ENCODE measurements at regions of chr15 and their contacts with region 1.

Region 1: DNA sequence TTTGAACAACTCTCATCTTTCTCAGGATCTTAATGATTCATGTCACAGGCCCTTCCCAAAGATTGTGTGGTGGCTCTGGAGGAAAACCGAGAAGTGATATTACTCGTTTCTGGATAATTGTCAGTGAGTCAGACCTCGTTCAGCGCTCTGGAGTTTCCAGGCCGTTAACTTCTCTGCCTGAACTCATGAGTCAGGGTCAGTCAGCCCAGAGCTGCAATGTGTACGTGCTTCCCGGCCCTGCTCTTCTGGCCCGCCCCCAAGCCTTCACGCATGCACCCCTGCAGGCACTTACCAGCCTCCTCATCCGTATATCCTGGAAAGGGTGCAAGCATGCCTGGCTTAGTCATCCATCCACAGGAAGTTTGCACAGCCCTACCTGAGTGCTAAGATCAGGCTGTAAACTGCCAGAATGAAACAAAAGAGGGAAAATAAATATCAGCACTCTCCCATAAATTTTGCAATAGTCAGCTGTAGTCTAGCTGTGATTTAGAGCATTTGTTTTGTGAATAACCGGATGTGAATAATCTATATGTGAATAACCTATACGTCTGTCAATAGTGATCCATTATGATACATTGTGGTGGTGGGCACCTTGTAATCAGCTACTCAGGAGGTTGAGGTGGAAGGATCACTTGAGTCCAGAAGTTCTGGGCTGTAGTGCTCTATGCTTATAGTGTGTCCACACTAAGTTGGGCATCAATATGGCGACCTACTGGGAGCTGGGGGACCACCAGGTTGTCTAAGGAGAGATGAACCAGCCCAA is 35.3 kb upstream of the SEMA4B start:
- DNase-seq: peak; percentile 99
- ATAC-seq: peak; percentile 97
- H3K4me3 ChIP-seq: no peak overlapping the region
- H3K27ac ChIP-seq: peak overlapping the region; percentile 100
- H3K4me1 ChIP-seq: peaks cover 61% of the 10 kb centered on the region
- H3K27me3 ChIP-seq: no peaks in the 10 kb centered on the region
- CTCF ChIP-seq: no peak

Region 2: DNA sequence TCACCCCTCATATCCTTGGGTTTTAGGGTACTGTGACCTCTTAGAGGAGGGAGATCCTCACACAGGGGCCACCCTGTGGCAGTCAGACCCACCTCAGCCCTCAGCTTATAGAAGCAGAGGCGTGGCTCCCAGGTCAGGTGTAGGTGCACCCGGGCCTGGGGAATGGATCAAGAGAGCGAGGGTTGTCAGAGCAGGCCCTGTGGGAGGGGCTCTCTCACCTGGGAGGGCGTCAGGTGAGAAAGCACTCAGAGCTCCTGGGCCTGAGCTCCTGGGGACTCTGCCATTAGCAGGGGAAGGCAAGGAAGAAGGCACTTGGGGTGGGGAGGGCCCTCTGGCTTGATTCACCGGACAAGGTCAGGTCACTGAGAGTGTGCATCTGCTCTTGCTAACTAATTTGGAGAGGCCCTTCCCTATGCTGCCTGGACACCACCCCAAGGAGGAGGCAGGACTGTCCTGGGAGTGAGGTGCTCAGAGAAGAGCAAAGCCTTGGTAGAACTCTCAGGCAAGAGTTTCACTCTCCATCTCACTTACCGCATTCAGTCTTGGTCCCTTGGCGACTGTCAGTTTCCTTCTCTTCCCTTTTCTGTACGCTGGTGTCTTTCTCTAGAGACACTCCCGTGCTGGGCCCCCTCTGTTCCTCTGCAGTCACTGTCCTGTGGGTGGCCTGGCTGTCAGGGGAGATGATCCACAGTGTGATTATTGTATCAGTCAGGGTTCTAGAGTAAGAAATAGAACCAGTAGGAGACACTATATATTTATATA is 107.7 kb before region 1 on chr15:
- CTCF ChIA-PET with region 1: no interaction called
- POLR2A ChIA-PET with region 1: no interaction called
- in situ Hi-C with region 1: no loop called
- intact Hi-C with region 1: no loop called
- DNase-seq: no peak
- ATAC-seq: no peak
- H3K4me3 ChIP-seq: no peak overlapping the region
- H3K27ac ChIP-seq: no peak overlapping the region
- H3K4me1 ChIP-seq: peaks cover 24% of the 10 kb centered on the region
- H3K27me3 ChIP-seq: no peaks in the 10 kb centered on the region
- CTCF ChIP-seq: no peak

Region 3: DNA sequence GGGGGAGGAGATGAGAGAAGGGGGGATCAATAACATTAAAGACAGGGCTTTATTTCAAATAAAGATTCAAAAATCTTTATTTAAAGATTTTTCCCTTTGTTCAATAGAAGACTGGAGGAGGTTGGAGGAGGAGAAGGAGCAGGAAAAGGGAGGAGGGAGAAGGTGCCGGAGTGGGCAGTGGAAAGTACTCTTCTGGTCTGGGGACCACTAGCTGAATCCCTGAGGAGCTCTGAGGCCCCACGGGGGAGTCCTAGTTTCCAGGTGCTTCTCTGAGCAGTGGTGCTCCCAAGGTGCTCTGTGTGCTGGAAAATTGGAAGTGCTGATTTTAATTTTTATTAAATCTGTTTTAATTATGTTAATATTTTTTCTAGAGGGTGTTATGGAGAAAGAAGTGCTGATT is 15.9 kb after region 1 on chr15:
- CTCF ChIA-PET with region 1: no interaction called
- POLR2A ChIA-PET with region 1: interaction called, 10 read pairs
- in situ Hi-C with region 1: no loop called
- intact Hi-C with region 1: no loop called
- DNase-seq: no peak
- ATAC-seq: no peak
- H3K4me3 ChIP-seq: peak overlapping the region in 1 of 2 experiments; percentile 20; a peak in 2 of 4 replicates
- H3K27ac ChIP-seq: peak overlapping the region; percentile 99
- H3K4me1 ChIP-seq: peaks cover 60% of the 10 kb centered on the region
- H3K27me3 ChIP-seq: no peaks in the 10 kb centered on the region
- CTCF ChIP-seq: no peak

Measured in Panc1 (cell line).